Heart left ventricle (tissue), 16 donors: ENCODE measurements at regions of chr2 and their contacts with region 1.

Region 1: GRCh38 chr2:38377050-38377828 is at the start of gene ATL2:
- DNase-seq: peak; percentile 96 to 97 (median 97)
- ATAC-seq: peak; percentile 94 to 97 (median 95)
- H3K4me3 ChIP-seq: peak within 1 kb of the TSS; percentile 66 to 99 (median 81)
- H3K27ac ChIP-seq: peak within 1 kb of the TSS; percentile 95 to 100 (median 98)
- H3K4me1 ChIP-seq: peaks cover 3 to 48% (median 37%) of the 10 kb centered on the region in 12 donors
- H3K27me3 ChIP-seq: no peaks in the 10 kb centered on the region
- CTCF ChIP-seq: peak in 1 of 12 donors; percentile 12
- POLR2A ChIP-seq: peak; percentile 75 to 88
- total RNA-seq, gene ATL2: 25.7 to 41.9 (median 30.6) TPM

Region 2: DNA sequence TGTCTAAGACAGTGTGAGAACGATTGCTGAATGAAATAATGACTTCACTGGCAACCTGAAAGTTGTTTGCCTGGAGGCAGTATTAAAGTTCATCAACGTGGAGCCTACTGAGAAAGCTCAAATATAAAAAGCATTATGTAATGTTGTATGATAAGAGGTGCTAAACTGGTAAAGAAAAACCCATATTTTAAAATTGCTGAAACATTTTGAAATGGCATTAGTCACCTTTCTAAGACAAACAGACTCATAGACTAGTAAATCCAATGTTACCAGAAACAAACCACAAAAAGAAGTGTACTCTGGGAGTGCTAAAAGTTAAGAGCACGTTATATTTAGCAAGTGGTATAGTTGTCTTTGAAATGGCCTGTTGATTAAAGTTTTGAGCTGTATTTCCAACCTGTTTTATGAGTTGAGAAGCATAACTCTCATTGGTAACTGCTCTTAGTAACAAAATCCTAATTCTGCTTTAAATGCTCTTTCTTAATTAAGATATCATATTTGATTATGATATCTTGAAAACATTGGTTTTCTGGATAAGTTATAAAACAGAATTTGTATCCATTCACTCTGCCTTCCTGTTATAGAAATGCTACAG is 364.0 kb before region 1 on chr2:
- intact Hi-C with region 1: no loop called
- DNase-seq: no peak
- ATAC-seq: no peak
- H3K4me3 ChIP-seq: no peak overlapping the region
- H3K27ac ChIP-seq: no peak overlapping the region
- H3K4me1 ChIP-seq: no peaks in the 10 kb centered on the region
- H3K27me3 ChIP-seq: no peaks in the 10 kb centered on the region
- CTCF ChIP-seq: no peak
- POLR2A ChIP-seq: no peak

Region 3: DNA sequence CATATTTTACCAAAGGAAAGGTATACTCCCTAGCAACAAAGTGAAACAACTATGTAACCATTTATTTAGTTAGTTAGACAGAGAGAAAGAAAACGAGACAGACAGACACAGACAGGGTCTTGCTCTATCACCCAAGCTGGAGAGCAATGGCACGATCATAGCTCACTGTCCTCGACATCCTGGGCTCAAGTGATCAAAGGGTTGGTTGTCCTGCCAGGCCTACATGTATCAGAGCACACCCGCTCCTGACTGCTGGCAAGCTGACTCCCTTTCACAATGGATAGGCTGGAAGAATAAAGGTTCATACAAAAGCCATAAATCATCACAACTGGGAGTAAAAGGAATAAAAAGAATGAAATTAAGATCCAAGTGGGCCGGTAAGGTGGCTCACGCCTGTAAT is 53.6 kb before region 1 on chr2:
- intact Hi-C with region 1: loop called in 6 of 10 experiments (anchors 5 to 10 kb)
- DNase-seq: no peak
- ATAC-seq: no peak
- H3K4me3 ChIP-seq: no peak overlapping the region
- H3K27ac ChIP-seq: no peak overlapping the region
- H3K4me1 ChIP-seq: peaks cover 0 to 23% (median 11%) of the 10 kb centered on the region in 12 donors
- H3K27me3 ChIP-seq: no peaks in the 10 kb centered on the region
- CTCF ChIP-seq: no peak
- POLR2A ChIP-seq: no peak

Region 4: DNA sequence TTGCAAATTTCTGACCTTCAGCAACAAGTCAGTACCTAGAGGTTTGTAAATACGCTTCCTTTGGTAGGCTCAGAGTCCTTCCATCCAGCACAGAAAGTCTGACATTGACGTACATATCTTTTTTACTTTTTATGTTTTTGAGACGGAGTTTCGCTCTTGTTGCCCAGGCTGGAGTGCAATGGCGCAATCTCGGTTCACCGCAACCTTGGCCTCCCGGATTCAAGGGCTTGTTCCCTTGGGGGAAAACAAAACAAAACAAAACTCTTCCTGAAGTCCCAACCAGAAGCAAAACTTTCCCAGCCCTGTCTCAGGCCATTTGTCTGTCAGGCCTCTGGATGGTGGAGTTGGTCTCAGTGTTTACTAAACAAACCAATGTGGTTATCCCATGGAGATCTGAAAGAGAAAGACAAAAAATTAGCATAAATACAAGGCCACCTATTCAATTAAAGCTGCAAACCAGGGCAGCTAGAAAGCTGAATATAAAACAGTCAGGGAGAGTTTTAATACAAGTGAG is 29.4 kb after region 1 on chr2:
- intact Hi-C with region 1: loop called in 1 of 10 experiments (anchors 2 kb)
- DNase-seq: peak; percentile 26 to 72 (median 35)
- ATAC-seq: peak in 3 of 4 donors; percentile 33 to 71 (median 39)
- H3K4me3 ChIP-seq: no peak overlapping the region
- H3K27ac ChIP-seq: peak overlapping the region; percentile 33 to 86 (median 65)
- H3K4me1 ChIP-seq: peaks cover 0 to 42% (median 18%) of the 10 kb centered on the region in 12 donors
- H3K27me3 ChIP-seq: no peaks in the 10 kb centered on the region
- CTCF ChIP-seq: no peak
- POLR2A ChIP-seq: no peak

Region 5: GRCh38 chr2:38442643-38443541 is 65.7 kb after region 1 on chr2:
- intact Hi-C with region 1: loop called in 3 of 10 experiments (anchors 5 to 10 kb)
- DNase-seq: peak in 2 of 5 donors; percentile 11 to 48
- ATAC-seq: peak in 3 of 4 donors; percentile 55 to 72 (median 64)
- H3K4me3 ChIP-seq: no peak overlapping the region
- H3K27ac ChIP-seq: peak overlapping the region in 1 of 12 donors; percentile 65
- H3K4me1 ChIP-seq: peaks cover 0 to 30% (median 8%) of the 10 kb centered on the region in 12 donors
- H3K27me3 ChIP-seq: no peaks in the 10 kb centered on the region
- CTCF ChIP-seq: no peak
- POLR2A ChIP-seq: no peak

Region 6: GRCh38 chr2:38498045-38498481 is 120.8 kb after region 1 on chr2:
- intact Hi-C with region 1: loop called in 2 of 10 experiments (anchors 5 to 10 kb)
- DNase-seq: peak in 4 of 5 donors; percentile 48 to 73 (median 57)
- ATAC-seq: peak; percentile 41 to 71 (median 54)
- H3K4me3 ChIP-seq: no peak overlapping the region
- H3K27ac ChIP-seq: peak overlapping the region in 4 of 12 donors; percentile 32 to 54 (median 42)
- H3K4me1 ChIP-seq: peaks cover 0 to 40% (median 10%) of the 10 kb centered on the region in 12 donors
- H3K27me3 ChIP-seq: no peaks in the 10 kb centered on the region
- CTCF ChIP-seq: no peak
- POLR2A ChIP-seq: no peak

Region 7: DNA sequence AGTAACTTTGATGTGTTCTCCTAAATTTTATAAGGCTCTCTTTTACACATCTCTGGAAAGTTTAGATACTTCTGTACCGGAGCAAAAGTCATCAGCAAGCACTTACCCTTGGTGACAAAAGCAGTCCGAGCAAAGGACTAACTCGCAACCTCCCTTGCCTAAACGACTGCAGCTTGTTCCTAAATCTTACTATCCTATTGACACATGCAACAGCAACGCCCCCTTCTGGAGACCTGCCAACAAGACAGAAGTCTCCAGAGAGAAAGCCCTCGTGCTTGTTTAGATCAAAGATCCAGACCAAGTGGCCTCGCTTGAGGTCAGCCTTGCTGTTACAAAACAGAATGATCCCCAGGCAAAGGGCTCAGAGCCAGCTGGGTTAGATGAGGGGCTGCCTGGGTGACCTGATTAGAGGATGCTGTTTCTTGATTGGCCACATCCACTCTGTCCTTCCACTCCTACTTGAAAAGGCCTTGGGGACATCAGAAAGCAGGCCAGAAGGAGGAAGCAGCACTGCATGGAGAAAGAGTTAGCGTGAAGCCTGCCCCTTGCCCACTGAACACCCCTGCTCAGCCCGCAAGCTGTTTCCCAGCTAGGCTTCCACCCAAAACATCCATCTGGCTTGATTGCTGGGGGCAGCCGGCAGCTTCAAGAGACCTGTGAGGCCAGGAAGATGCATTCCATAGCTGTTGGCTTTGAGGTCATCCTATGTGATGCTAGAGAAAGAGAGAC is 131.2 kb after region 1 on chr2:
- intact Hi-C with region 1: loop called in 2 of 10 experiments (anchors 5 to 10 kb)
- DNase-seq: peak; percentile 82 to 93 (median 86)
- ATAC-seq: peak; percentile 70 to 75 (median 74)
- H3K4me3 ChIP-seq: no peak overlapping the region
- H3K27ac ChIP-seq: peak overlapping the region in 6 of 12 donors; percentile 22 to 81 (median 32)
- H3K4me1 ChIP-seq: peaks cover 0 to 23% (median 8%) of the 10 kb centered on the region in 12 donors
- H3K27me3 ChIP-seq: no peaks in the 10 kb centered on the region
- CTCF ChIP-seq: peak; percentile 19 to 63 (median 41)
- POLR2A ChIP-seq: no peak

Region 8: DNA sequence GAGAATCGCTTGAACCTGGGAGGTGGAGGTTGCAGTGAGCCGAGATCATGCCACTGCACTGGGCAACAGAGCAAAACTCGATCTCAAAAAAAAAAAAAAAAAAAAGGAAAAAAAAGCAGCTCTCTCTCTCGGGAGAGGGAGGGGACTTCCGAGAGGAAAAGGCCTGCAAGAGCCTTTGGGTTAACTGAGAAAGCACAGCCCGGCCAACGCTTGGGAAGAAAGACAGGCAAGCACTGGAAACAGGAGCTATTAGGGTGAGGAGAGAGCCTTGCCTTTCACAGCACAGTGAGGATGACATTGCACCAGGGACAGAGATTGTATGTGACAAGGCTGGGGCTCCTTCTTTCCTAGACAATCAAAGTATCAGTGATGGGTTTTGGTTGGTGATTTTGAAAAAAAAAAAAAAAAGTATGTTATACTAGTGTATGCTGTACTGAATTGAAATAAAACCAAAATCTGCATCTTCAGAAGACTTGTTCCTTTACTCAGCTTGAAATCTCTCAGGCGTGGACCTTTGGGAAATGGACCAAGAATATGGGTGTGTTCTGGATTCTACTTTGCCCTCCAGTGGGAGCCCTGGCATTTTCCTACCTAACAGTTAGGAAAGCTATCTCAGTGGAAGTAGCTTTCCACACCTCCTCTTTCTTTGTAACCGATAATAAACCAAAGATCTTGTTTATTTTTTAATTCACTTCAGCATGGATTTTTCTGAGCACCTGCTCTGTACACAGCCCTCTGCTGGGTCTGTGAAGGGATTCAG is 357.2 kb after region 1 on chr2:
- intact Hi-C with region 1: loop called in 1 of 10 experiments (anchors 10 kb)
- DNase-seq: peak in 2 of 5 donors; percentile 37 to 45
- ATAC-seq: peak in 2 of 4 donors; percentile 32 to 63
- H3K4me3 ChIP-seq: no peak overlapping the region
- H3K27ac ChIP-seq: peak overlapping the region in 3 of 12 donors; percentile 2 to 54 (median 16)
- H3K4me1 ChIP-seq: peaks cover 0 to 29% (median 11%) of the 10 kb centered on the region in 12 donors
- H3K27me3 ChIP-seq: no peaks in the 10 kb centered on the region
- CTCF ChIP-seq: no peak
- POLR2A ChIP-seq: no peak